Mammary epithelial cell (primary cell): ENCODE measurements at regions of chr6 and their contacts with region 1.

Region 1: GRCh38 chr6:100105138-100105753 is 111.2 kb upstream of the MCHR2 start:
- DNase-seq: no peak
- H3K4me3 ChIP-seq: no peak overlapping the region
- H3K27ac ChIP-seq: no peak overlapping the region
- H3K4me1 ChIP-seq: no peaks in the 10 kb centered on the region
- H3K27me3 ChIP-seq: peaks cover 3% of the 10 kb centered on the region
- CTCF ChIP-seq: no peak

Region 2: GRCh38 chr6:100132005-100132404 is 26.8 kb after region 1 on chr6:
- CTCF ChIA-PET with region 1: interaction called, 14 read pairs
- dilution Hi-C with region 1: no loop called
- in situ Hi-C with region 1: no loop called
- intact Hi-C with region 1: no loop called
- DNase-seq: no peak
- H3K4me3 ChIP-seq: no peak overlapping the region
- H3K27ac ChIP-seq: no peak overlapping the region
- H3K4me1 ChIP-seq: no peaks in the 10 kb centered on the region
- H3K27me3 ChIP-seq: no peaks in the 10 kb centered on the region
- CTCF ChIP-seq: no peak

Region 3: DNA sequence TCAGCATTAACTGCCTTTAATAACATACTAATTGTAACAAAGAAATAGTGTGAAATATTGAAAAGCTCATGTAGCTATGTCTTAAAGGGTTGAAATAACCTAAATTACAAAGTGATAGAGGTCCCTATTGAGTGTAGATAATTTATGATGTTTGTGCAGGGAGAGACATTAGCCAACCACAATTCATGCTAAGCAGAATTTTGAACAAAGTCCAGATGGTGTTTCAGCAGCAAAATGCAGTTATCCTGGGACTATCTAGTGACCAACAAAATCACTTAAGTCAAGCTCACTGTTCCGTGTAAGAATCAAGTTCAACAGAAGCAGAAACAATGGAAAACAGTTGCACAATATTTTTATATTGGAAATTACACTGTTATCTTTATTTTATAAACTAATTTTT is 141.0 kb after region 1 on chr6:
- CTCF ChIA-PET with region 1: no interaction called
- dilution Hi-C with region 1: no loop called
- in situ Hi-C with region 1: no loop called
- intact Hi-C with region 1: no loop called
- DNase-seq: no peak
- H3K4me3 ChIP-seq: no peak overlapping the region
- H3K27ac ChIP-seq: no peak overlapping the region
- H3K4me1 ChIP-seq: no peaks in the 10 kb centered on the region
- H3K27me3 ChIP-seq: no peaks in the 10 kb centered on the region
- CTCF ChIP-seq: no peak

Region 4: GRCh38 chr6:100664274-100665040 is 559.2 kb after region 1 on chr6:
- CTCF ChIA-PET with region 1: interaction called, 10 read pairs
- dilution Hi-C with region 1: no loop called
- in situ Hi-C with region 1: loop called (anchors 10 to 25 kb)
- intact Hi-C with region 1: no loop called
- DNase-seq: peak; percentile 17
- H3K4me3 ChIP-seq: no peak overlapping the region
- H3K27ac ChIP-seq: peak overlapping the region; percentile 93
- H3K4me1 ChIP-seq: peaks cover 13% of the 10 kb centered on the region
- H3K27me3 ChIP-seq: no peaks in the 10 kb centered on the region
- CTCF ChIP-seq: peak; percentile 51 to 65